ENCODE measurements at regions of chr15 and their contacts with region 1.

Region 1: DNA sequence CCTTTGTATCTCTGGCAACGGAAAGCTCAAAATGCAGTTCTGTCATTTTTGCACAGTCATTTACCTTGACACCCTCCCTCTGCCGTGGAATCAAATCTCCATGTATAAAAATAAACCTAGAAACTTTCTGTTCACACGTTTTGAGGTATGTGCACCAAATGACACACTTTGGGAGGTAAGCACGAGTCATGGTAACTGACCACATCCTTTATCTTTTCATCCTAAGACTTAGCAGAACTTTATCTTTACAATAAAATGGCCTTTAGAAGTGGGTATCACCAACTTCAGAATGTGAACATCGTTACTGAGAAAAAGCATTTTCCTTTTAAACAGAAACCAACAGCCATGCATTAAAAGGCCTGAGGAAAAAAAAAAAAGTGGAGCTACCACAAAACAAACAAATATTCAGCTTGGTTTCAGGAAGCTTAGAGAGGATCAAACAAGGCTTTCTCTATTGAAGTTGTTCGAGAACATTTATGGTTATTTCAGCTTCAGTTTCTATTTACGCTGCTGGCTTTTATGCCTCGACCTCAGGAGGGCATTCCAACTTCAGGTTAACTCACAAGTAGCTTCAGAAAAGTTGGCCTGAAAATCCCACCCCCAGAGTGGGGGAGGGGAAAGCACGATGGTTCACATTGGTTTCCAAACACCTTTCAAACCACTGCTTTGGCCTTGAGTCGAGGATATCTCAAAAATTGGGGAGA is 171.1 kb upstream of the ICE2 start:
- DNase-seq: peak; percentile 74
- H3K4me3 Mint-ChIP-seq: peak overlapping the region; percentile 52
- H3K27ac Mint-ChIP-seq: peak overlapping the region; percentile 88
- H3K4me1 Mint-ChIP-seq: peaks cover 49% of the 10 kb centered on the region
- H3K27me3 Mint-ChIP-seq: no peaks in the 10 kb centered on the region

Region 2: GRCh38 chr15:60507596-60508424 is 142.2 kb before region 1 on chr15:
- CTCF ChIA-PET with region 1: no interaction called
- intact Hi-C with region 1: loop called (anchors 5 kb)
- DNase-seq: peak; percentile 70
- H3K4me3 Mint-ChIP-seq: no peak overlapping the region
- H3K27ac Mint-ChIP-seq: peak overlapping the region; percentile 68
- H3K4me1 Mint-ChIP-seq: peaks cover 48% of the 10 kb centered on the region
- H3K27me3 Mint-ChIP-seq: no peaks in the 10 kb centered on the region

Region 3: GRCh38 chr15:60660290-60661051 is 10.5 kb after region 1 on chr15:
- CTCF ChIA-PET with region 1: interaction called, 6 read pairs
- intact Hi-C with region 1: loop called (anchors 1 kb)
- DNase-seq: peak; percentile 26
- H3K4me3 Mint-ChIP-seq: no peak overlapping the region
- H3K27ac Mint-ChIP-seq: no peak overlapping the region
- H3K4me1 Mint-ChIP-seq: peaks cover 23% of the 10 kb centered on the region
- H3K27me3 Mint-ChIP-seq: peaks cover 3% of the 10 kb centered on the region

Region 4: GRCh38 chr15:60720493-60721256 is 70.7 kb after region 1 on chr15:
- CTCF ChIA-PET with region 1: interaction called, 3 read pairs
- intact Hi-C with region 1: loop called (anchors 1 kb)
- DNase-seq: peak; percentile 90
- H3K4me3 Mint-ChIP-seq: peak overlapping the region; percentile 49
- H3K27ac Mint-ChIP-seq: peak overlapping the region; percentile 99
- H3K4me1 Mint-ChIP-seq: peaks cover 59% of the 10 kb centered on the region
- H3K27me3 Mint-ChIP-seq: no peaks in the 10 kb centered on the region

Region 5: GRCh38 chr15:60798821-60799220 is 148.8 kb after region 1 on chr15:
- CTCF ChIA-PET with region 1: interaction called, 4 read pairs
- intact Hi-C with region 1: loop called (anchors 1 kb)
- DNase-seq: peak; percentile 87
- H3K4me3 Mint-ChIP-seq: peak overlapping the region; percentile 34
- H3K27ac Mint-ChIP-seq: peak overlapping the region; percentile 98
- H3K4me1 Mint-ChIP-seq: peaks cover 83% of the 10 kb centered on the region
- H3K27me3 Mint-ChIP-seq: no peaks in the 10 kb centered on the region

Region 6: DNA sequence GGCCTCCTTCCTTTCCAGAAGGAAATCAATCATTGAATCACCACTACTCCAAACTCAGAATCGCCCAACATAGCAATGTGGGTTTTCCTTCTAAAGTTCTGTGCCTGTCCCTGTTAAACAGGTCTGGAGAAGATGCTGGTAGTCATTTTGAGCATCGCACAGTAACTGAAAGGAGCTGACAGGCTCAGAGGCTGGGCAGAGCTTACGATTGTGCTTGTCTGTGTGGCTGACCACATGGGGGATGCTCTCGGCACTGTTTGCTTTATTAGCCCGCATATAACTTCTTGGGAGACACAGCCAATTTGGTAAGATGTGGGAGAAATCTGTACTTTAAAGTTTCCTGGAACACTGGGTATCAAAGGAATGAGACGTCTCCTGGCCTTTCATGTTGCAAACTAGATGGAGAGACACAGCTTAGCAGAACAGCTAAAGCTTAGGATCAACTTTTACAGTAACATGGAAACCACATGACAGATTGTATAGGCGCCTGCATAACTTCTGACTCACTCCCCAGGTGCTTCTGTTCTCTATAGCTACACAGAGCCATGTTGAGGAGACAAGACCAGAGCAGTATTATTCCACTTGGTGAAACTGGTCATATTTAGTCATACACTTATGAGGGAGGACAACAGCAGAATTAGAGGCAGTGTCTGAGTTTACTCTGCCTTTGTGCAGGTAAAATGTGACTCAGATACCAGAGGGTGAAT is 205.0 kb after region 1 on chr15:
- CTCF ChIA-PET with region 1: interaction called, 4 read pairs
- intact Hi-C with region 1: loop called (anchors 2 kb)
- DNase-seq: peak; percentile 60
- H3K4me3 Mint-ChIP-seq: no peak overlapping the region
- H3K27ac Mint-ChIP-seq: peak overlapping the region; percentile 13
- H3K4me1 Mint-ChIP-seq: peaks cover 64% of the 10 kb centered on the region
- H3K27me3 Mint-ChIP-seq: no peaks in the 10 kb centered on the region

Region 7: GRCh38 chr15:60899322-60899966 is 249.4 kb after region 1 on chr15:
- CTCF ChIA-PET with region 1: interaction called, 7 read pairs
- intact Hi-C with region 1: loop called (anchors 1 kb)
- DNase-seq: peak; percentile 60
- H3K4me3 Mint-ChIP-seq: no peak overlapping the region
- H3K27ac Mint-ChIP-seq: peak overlapping the region; percentile 74
- H3K4me1 Mint-ChIP-seq: peaks cover 63% of the 10 kb centered on the region
- H3K27me3 Mint-ChIP-seq: no peaks in the 10 kb centered on the region

Region 8: GRCh38 chr15:60964527-60964926 is 314.5 kb after region 1 on chr15:
- CTCF ChIA-PET with region 1: no interaction called
- intact Hi-C with region 1: no loop called
- DNase-seq: no peak
- H3K4me3 Mint-ChIP-seq: no peak overlapping the region
- H3K27ac Mint-ChIP-seq: no peak overlapping the region
- H3K4me1 Mint-ChIP-seq: no peaks in the 10 kb centered on the region
- H3K27me3 Mint-ChIP-seq: no peaks in the 10 kb centered on the region